ENCODE measurements at regions of chr15 and their contacts with region 1.

Region 1: DNA sequence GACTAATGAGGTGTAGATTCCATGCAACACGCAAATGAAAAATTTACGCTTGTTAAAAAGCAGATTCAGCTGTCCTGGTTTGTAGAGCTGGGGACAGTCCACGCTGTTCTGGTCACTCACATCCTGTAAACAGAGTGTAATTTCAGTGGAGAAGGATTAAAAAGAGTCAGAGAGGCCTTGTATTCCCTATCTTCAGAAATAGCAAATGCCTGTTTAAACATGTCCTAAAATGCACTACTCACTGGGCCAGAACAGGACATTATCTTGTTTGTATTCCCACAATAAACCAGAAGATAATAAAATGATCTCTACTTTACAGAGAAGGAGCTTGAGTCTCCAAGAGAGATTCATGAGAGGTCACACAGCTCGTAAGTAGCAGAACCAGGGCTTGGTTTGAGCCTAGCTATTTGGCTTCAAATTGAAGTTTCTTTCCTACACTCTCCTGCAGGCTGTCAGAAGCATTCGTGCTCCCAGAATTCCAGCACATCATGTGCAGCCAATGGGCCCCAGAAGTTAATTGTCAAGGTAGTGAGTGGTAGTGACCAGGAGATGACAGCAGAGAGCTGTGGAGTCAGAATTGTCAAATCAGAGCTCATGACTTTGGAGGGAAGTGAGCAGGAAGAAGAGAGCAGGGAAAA is 242.5 kb downstream of the ATP8B4 start:
- DNase-seq: peak; percentile 53
- ATAC-seq: peak; percentile 96
- H3K4me3 Mint-ChIP-seq: no peak overlapping the region
- H3K27ac Mint-ChIP-seq: no peak overlapping the region
- H3K4me1 Mint-ChIP-seq: peaks cover 12% of the 10 kb centered on the region
- H3K27me3 Mint-ChIP-seq: no peaks in the 10 kb centered on the region
- CTCF ChIP-seq: peak; percentile 56; the same call in 1 of the 2 replicates

Region 2: DNA sequence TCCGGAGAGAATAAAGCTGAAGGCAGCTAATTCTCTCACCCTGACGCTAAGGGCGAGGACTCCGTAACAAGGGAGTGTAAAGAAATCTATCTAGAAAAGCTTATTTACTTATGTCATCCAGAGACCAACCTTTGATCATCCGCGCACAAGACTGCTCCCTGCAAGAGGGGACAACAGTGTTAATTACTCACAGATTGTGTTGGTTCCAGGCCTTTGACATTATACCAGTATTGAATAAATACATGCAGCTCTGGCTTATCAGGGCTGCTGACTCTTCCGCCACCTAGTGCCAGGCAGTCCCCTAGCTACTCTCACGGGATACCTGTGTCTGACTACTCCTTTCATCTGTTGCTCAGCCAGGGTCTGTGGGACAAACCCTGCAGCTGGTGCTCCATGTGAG is 44.0 kb before region 1 on chr15:
- CTCF ChIA-PET with region 1: interaction called, 18 read pairs
- POLR2A ChIA-PET with region 1: no interaction called
- DNase-seq: peak; percentile 53
- ATAC-seq: peak; percentile 100
- H3K4me3 Mint-ChIP-seq: no peak overlapping the region
- H3K27ac Mint-ChIP-seq: peak overlapping the region; percentile 17; the same call in 1 of the 2 replicates
- H3K4me1 Mint-ChIP-seq: peaks cover 6% of the 10 kb centered on the region
- H3K27me3 Mint-ChIP-seq: peaks cover 5% of the 10 kb centered on the region
- CTCF ChIP-seq: peak; percentile 38

Region 3: GRCh38 chr15:49863431-49864205 is 12.9 kb before region 1 on chr15:
- CTCF ChIA-PET with region 1: interaction called, 12 read pairs
- POLR2A ChIA-PET with region 1: no interaction called
- DNase-seq: no peak
- ATAC-seq: no peak
- H3K4me3 Mint-ChIP-seq: no peak overlapping the region
- H3K27ac Mint-ChIP-seq: no peak overlapping the region
- H3K4me1 Mint-ChIP-seq: peaks cover 11% of the 10 kb centered on the region
- H3K27me3 Mint-ChIP-seq: no peaks in the 10 kb centered on the region
- CTCF ChIP-seq: no peak

Region 4: DNA sequence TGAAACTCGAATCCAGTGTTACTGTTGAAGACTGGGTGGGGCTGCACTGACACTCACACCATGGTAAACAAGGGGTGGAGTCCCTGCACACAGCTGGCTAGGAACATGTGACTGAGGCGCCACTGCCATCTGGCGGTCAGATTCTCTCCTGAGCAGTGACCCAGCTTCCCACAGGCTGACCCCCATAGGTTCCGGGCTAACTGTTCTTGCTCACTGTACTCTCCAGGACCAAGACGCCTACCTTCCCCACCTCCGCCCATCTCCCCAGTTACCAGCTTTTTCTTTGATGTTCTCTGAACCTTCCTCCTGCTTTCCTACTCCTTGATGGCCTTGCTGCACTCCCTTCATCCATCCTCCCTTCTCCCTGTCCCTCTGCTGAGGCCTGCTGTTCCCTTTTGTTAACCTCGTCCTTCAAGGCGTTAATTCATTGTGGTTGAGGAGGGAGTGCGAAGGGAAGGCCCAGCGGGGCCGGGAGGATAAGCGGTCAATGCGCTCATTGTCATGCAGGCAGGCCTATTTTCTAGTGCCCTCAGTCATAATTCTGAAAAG is 127.3 kb after region 1 on chr15:
- CTCF ChIA-PET with region 1: interaction called, 114 read pairs
- POLR2A ChIA-PET with region 1: interaction called, 9 read pairs
- DNase-seq: peak; percentile 94
- ATAC-seq: peak; percentile 99
- H3K4me3 Mint-ChIP-seq: peak overlapping the region; percentile 48
- H3K27ac Mint-ChIP-seq: peak overlapping the region; percentile 86
- H3K4me1 Mint-ChIP-seq: peaks cover 24% of the 10 kb centered on the region
- H3K27me3 Mint-ChIP-seq: no peaks in the 10 kb centered on the region
- CTCF ChIP-seq: peak; percentile 56

Region 5: GRCh38 chr15:50051803-50052419 is 175.4 kb after region 1 on chr15:
- CTCF ChIA-PET with region 1: interaction called, 37 read pairs
- POLR2A ChIA-PET with region 1: no interaction called
- DNase-seq: peak; percentile 44
- ATAC-seq: peak; percentile 67
- H3K4me3 Mint-ChIP-seq: no peak overlapping the region
- H3K27ac Mint-ChIP-seq: no peak overlapping the region
- H3K4me1 Mint-ChIP-seq: no peaks in the 10 kb centered on the region
- H3K27me3 Mint-ChIP-seq: no peaks in the 10 kb centered on the region
- CTCF ChIP-seq: 0 out of 2 replicates have a peak, but pooled peaks have one; percentile 12

Region 6: GRCh38 chr15:50137330-50137761 is 260.8 kb after region 1 on chr15:
- CTCF ChIA-PET with region 1: interaction called, 10 read pairs
- POLR2A ChIA-PET with region 1: no interaction called
- DNase-seq: no peak
- ATAC-seq: no peak
- H3K4me3 Mint-ChIP-seq: no peak overlapping the region
- H3K27ac Mint-ChIP-seq: no peak overlapping the region
- H3K4me1 Mint-ChIP-seq: 0 out of 2 replicates have a peak, but pooled peaks cover 3% of the 10 kb centered on the region
- H3K27me3 Mint-ChIP-seq: no peaks in the 10 kb centered on the region
- CTCF ChIP-seq: no peak

Region 7: DNA sequence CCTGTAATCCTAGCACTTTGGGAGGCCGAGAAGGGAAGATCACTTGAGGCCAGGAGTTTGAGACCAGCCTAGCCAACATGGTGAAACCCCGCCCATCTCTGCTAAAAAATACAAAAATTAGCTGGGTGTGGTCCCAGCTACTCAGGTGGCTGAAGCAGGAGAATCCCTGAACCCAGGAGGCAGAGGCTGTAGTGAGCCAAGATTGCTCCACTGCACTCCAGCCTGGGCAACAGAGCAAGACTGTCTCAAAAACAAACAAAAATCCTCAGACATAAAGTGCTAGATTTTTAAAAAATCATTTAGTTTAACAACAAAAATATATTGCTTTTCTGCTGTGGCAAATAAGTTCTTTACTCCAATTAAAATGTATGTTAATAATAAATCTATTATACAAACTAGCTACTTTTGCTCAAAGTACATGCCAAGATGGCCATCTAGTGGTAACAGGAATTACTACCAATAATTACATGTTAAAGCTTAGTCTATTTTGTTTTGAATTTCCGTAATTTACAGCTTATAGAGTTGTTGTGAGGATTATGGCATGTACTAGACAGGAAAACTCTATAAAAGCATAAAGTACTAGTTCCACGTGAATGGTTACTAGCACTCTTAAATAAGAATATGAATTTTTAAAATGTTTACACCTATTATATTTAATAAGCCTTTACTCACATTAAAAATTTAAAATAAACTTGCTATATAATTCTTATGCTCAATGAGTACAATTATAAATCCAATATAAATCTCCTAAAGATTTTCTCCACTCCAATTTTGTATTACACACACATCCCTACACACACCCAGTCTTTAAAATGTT is 439.5 kb after region 1 on chr15:
- CTCF ChIA-PET with region 1: interaction called, 10 read pairs
- POLR2A ChIA-PET with region 1: no interaction called
- DNase-seq: no peak
- ATAC-seq: no peak; the same call in 1 of the 2 replicates
- H3K4me3 Mint-ChIP-seq: no peak overlapping the region
- H3K27ac Mint-ChIP-seq: no peak overlapping the region
- H3K4me1 Mint-ChIP-seq: no peaks in the 10 kb centered on the region
- H3K27me3 Mint-ChIP-seq: no peaks in the 10 kb centered on the region
- CTCF ChIP-seq: peak; percentile 21; the same call in 1 of the 2 replicates

Measured in WTC11 (cell line).